A673 (cell line): ENCODE measurements at regions of chr5 and their contacts with region 1.

Region 1: GRCh38 chr5:153964880-153965645 is 73.6 kb downstream of the FAM114A2 start:
- DNase-seq: peak; percentile 69
- H3K4me3 ChIP-seq: no peak overlapping the region
- H3K27ac ChIP-seq: no peak overlapping the region
- H3K4me1 ChIP-seq: no peaks in the 10 kb centered on the region
- H3K27me3 ChIP-seq: no peaks in the 10 kb centered on the region
- CTCF ChIP-seq: peak; percentile 82

Region 2: DNA sequence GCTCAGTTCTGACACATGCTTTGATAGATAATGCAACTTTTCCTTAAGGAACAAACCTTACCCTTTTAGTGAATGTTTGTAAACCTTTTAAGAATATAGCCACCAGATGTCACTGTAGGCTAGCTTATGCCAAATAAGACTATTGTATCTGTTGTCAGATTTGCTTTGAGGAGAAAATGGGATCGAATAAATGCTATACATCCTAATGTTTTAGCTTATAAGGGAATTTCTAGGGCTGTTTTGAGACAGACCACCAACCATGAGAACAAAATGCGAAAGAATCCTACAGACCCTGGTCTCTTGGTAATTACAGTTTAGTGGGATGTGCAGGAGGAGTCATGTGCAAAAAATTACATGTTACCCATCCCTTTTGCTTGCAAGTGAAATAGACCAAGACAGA is 1432.3 kb before region 1 on chr5:
- CTCF ChIA-PET with region 1: interaction called, 10 read pairs
- POLR2A ChIA-PET with region 1: no interaction called
- intact Hi-C with region 1: loop called (anchors 1 kb)
- DNase-seq: peak; percentile 62
- H3K4me3 ChIP-seq: no peak overlapping the region
- H3K27ac ChIP-seq: no peak overlapping the region
- H3K4me1 ChIP-seq: no peaks in the 10 kb centered on the region
- H3K27me3 ChIP-seq: no peaks in the 10 kb centered on the region
- CTCF ChIP-seq: peak; percentile 61

Region 3: GRCh38 chr5:152560512-152561137 is 1404.4 kb before region 1 on chr5:
- CTCF ChIA-PET with region 1: interaction called, 9 read pairs
- POLR2A ChIA-PET with region 1: no interaction called
- intact Hi-C with region 1: loop called (anchors 10 kb)
- DNase-seq: peak; percentile 63
- H3K4me3 ChIP-seq: no peak overlapping the region
- H3K27ac ChIP-seq: no peak overlapping the region
- H3K4me1 ChIP-seq: no peaks in the 10 kb centered on the region
- H3K27me3 ChIP-seq: no peaks in the 10 kb centered on the region
- CTCF ChIP-seq: peak; percentile 81

Region 4: DNA sequence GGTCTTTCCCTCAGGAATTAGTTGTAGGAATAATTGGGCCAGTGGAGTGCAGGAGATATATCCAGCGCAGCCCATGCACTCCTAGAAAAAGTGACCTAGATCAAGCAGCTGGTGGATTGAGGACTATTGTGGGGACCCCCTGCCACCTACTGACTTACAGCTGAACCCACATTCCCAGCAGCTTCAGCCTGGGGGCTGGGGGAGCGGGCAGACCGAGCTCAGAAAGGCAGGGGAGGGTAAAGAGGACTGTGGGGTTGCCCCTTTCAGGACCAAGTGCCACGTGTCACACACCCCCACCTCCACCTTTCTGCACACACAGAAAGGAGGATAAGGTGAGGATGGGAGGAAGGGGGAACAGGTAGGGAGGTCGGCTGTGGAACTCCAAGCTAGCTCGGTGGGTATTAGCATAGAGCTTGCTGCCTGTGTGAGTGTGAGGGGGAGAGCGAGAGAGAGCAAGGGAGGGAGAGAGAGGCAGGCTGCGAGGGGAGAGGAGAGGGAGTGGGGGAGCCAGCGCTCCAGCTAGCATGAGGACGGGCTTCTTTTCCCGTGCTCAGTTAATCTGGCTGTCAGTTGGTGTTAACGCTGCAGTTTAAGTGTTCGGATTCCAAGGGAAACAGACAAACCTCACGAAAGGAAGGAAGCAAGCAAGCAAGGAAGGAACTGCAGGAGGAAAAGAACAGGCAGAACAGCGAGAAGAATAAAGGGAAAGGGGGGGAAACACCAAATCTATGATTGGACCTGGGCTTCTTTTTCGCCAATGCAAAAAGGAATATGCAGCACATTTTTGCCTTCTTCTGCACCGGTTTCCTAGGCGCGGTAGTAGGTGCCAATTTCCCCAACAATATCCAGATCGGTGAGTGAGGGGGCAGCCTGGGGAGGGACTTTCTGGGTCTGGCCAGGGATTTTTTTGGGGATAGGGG is 474.7 kb before region 1 on chr5 and contains the start of gene GRIA1:
- CTCF ChIA-PET with region 1: interaction called, 4 read pairs
- POLR2A ChIA-PET with region 1: no interaction called
- intact Hi-C with region 1: loop called (anchors 2 kb)
- DNase-seq: no peak
- H3K4me3 ChIP-seq: no peak within 1 kb of the TSS
- H3K27ac ChIP-seq: no peak within 1 kb of the TSS
- H3K4me1 ChIP-seq: peaks cover 4% of the 10 kb centered on the region
- H3K27me3 ChIP-seq: no peaks in the 10 kb centered on the region
- CTCF ChIP-seq: no peak
- total RNA-seq, gene GRIA1: 0.69 and 1.5 TPM in 2 replicates

Region 5: DNA sequence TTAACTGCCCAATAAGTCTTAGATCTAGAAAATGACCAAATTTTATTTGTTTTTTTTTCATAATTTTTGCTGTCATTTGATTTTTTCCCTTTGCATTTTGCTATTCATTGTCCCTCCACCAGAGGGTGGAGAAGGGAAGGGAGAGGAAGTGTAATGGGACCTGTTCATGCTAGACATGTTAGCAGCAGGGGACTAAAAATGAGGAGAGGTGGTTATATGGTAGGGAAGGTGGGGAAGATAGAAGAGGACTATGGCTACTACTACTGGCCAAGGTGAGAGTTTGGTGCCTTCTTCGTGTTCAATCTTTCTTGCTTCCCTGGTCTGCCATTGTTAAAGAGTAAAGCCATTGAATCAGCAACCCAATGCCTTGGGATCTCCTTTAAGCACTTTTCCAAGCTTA is 468.2 kb before region 1 on chr5:
- CTCF ChIA-PET with region 1: interaction called, 4 read pairs
- POLR2A ChIA-PET with region 1: no interaction called
- intact Hi-C with region 1: loop called (anchors 2 kb)
- DNase-seq: peak; percentile 33
- H3K4me3 ChIP-seq: no peak overlapping the region
- H3K27ac ChIP-seq: no peak overlapping the region
- H3K4me1 ChIP-seq: peaks cover 4% of the 10 kb centered on the region
- H3K27me3 ChIP-seq: no peaks in the 10 kb centered on the region
- CTCF ChIP-seq: peak; percentile 71